Activated naive CD4-positive, alpha-beta T cell treated with anti-CD3 and anti-CD28 coated beads for 36 hours (primary cell): ENCODE measurements at regions of chr6 and their contacts with region 1.

Region 1: DNA sequence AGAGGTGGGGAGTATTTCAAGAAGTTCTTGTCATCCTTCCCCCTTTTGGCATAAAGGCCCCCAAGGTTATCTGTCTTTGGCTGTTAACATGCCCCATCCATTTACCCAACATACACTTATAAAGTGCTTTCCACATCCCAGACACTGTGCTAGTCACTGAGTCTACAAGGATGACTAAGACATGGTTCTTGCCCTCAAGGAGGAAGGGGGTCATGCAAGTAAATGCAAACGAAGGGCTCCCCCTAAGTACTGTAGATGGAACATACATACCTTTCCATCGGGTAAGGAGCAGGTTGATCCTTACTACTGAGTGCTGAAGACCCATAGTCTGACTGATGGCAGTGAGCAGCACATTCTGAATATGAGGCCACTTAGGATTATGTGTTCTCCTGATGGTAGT is 38.3 kb downstream of the HECA start:
- DNase-seq: peak; percentile 46
- H3K4me3 Mint-ChIP-seq: no peak overlapping the region
- H3K27ac Mint-ChIP-seq: peak overlapping the region; percentile 85
- H3K4me1 Mint-ChIP-seq: peaks cover 88% of the 10 kb centered on the region
- H3K27me3 Mint-ChIP-seq: no peaks in the 10 kb centered on the region

Region 2: GRCh38 chr6:139146317-139146726 is 26.9 kb before region 1 on chr6:
- CTCF ChIA-PET with region 1: interaction called, 5 read pairs
- intact Hi-C with region 1: loop called (anchors 2 kb)
- DNase-seq: no peak
- H3K4me3 Mint-ChIP-seq: peak overlapping the region; percentile 61
- H3K27ac Mint-ChIP-seq: peak overlapping the region; percentile 95
- H3K4me1 Mint-ChIP-seq: peaks cover 91% of the 10 kb centered on the region
- H3K27me3 Mint-ChIP-seq: no peaks in the 10 kb centered on the region

Region 3: GRCh38 chr6:139153855-139154254 is 19.3 kb before region 1 on chr6:
- CTCF ChIA-PET with region 1: interaction called, 5 read pairs
- intact Hi-C with region 1: loop called (anchors 1 kb)
- DNase-seq: no peak
- H3K4me3 Mint-ChIP-seq: no peak overlapping the region
- H3K27ac Mint-ChIP-seq: peak overlapping the region; percentile 89
- H3K4me1 Mint-ChIP-seq: peaks cover 81% of the 10 kb centered on the region
- H3K27me3 Mint-ChIP-seq: no peaks in the 10 kb centered on the region

Region 4: DNA sequence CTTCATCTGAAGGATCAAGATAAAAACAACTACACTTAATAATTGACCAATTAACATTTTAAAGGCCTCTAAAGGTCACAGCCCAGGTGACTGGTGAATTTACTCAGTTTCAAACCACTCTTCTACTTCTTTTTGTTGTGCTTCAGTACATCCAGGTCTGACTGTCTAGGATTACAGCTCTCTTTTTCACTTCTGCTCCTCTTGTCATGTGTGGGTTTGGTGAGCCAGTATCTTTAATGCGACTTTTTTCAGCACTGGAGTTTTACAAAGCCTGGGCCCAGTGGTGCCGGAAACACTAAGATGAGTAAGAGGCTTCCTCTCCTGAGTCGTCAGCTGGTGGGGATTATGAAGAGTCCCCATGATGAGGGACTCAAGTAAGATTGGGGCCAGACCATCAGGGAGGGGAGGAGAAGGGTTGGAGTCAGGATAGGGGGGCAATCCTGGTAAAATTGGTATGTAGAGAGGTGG is 11.3 kb before region 1 on chr6:
- CTCF ChIA-PET with region 1: interaction called, 4 read pairs
- intact Hi-C with region 1: loop called (anchors 1 kb)
- DNase-seq: peak; percentile 88
- H3K4me3 Mint-ChIP-seq: peak overlapping the region; percentile 39
- H3K27ac Mint-ChIP-seq: peak overlapping the region; percentile 92
- H3K4me1 Mint-ChIP-seq: peaks cover 91% of the 10 kb centered on the region
- H3K27me3 Mint-ChIP-seq: no peaks in the 10 kb centered on the region

Region 5: DNA sequence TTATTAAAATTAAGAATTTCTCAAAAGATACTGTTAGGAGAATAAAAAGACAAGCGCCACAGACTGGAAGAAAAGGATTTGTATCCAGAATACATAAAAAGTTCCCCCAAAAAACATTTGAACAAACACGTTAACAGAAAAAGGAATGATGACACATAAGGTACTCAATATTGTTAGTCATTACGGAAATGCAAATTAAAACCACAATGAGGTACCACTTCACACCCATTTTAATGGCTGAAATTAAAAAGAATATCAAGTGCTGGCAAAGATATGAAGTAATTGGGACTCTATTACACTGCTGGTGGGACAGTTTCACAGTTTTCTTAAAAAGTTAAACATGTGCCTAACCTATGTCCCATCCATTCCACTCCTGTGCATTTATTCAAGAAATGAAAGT is 13.1 kb after region 1 on chr6:
- CTCF ChIA-PET with region 1: interaction called, 4 read pairs
- intact Hi-C with region 1: loop called (anchors 1 kb)
- DNase-seq: no peak
- H3K4me3 Mint-ChIP-seq: no peak overlapping the region
- H3K27ac Mint-ChIP-seq: no peak overlapping the region
- H3K4me1 Mint-ChIP-seq: peaks cover 33% of the 10 kb centered on the region
- H3K27me3 Mint-ChIP-seq: no peaks in the 10 kb centered on the region

Region 6: GRCh38 chr6:139250296-139251044 is 77.3 kb after region 1 on chr6:
- CTCF ChIA-PET with region 1: no interaction called
- intact Hi-C with region 1: loop called (anchors 5 kb)
- DNase-seq: peak; percentile 66
- H3K4me3 Mint-ChIP-seq: no peak overlapping the region
- H3K27ac Mint-ChIP-seq: peak overlapping the region; percentile 20
- H3K4me1 Mint-ChIP-seq: peaks cover 40% of the 10 kb centered on the region
- H3K27me3 Mint-ChIP-seq: no peaks in the 10 kb centered on the region